ENCODE measurements at regions of chr6 and their contacts with region 1.

Region 1: GRCh38 chr6:31922942-31923341 is 4.6 kb upstream of the C2 start:
- DNase-seq: peak; percentile 50 to 59 (median 58)
- H3K4me3 ChIP-seq: no peak overlapping the region
- H3K27ac ChIP-seq: no peak overlapping the region
- H3K4me1 ChIP-seq: no peaks in the 10 kb centered on the region
- H3K27me3 ChIP-seq: no peaks in the 10 kb centered on the region

Region 2: GRCh38 chr6:31815025-31815838 is 107.7 kb before region 1 on chr6 and contains the starts of genes HSPA1A and HSPA1L:
- CTCF ChIA-PET with region 1: no interaction called
- POLR2A ChIA-PET with region 1: no interaction called
- DNase-seq: peak; percentile 86 to 91 (median 90)
- H3K4me3 ChIP-seq: peak within 1 kb of the TSS; percentile 69 to 98 (median 88)
- H3K27ac ChIP-seq: peak within 1 kb of the TSS; percentile 58 to 83
- H3K4me1 ChIP-seq: peaks cover 16 to 38% (median 27%) of the 10 kb centered on the region in 4 experiments
- H3K27me3 ChIP-seq: no peaks in the 10 kb centered on the region

Region 3: DNA sequence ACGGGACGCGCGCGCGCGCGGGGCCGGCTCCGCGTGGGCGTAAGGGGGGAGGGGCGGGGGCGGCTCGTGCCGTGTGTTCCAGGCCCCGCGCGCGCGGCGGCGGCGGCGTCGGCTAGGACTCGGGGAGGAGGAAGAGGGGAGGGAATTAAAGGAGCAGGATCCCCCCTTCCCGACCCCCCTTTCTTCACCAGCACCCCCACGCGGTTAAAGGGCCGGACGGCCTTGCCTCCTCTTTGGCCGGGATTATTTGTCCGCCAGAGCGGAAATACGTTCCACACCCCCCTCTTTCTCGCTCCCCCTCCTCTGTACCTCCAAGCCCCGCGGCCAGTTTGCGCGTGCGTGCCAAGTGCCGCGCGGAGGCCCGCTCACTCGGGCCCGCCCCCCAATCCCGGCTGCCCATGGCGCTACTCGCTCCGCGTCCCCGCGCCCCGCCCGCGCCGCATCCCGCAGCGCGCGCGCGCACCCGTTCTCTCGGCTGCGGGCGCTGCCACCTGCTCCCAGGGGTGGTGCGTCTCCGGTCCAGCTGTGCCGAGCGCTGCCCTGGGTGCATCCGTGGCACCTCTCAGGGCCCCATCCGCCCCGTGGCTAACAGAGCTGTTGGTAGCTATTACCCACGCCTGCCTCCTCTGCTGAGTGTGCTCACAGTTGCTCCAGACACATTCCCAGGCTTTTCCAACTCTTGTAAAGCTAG is 20.8 kb before region 1 on chr6 and contains the start of gene ZBTB12:
- CTCF ChIA-PET with region 1: interaction called, 12 read pairs
- POLR2A ChIA-PET with region 1: interaction called, 3 read pairs
- DNase-seq: peak; percentile 91 to 97 (median 96)
- H3K4me3 ChIP-seq: peak within 1 kb of the TSS; percentile 50 to 84 (median 75)
- H3K27ac ChIP-seq: peak within 1 kb of the TSS; percentile 40 to 77
- H3K4me1 ChIP-seq: peaks cover 4 to 44% (median 34%) of the 10 kb centered on the region in 4 experiments
- H3K27me3 ChIP-seq: no peaks in the 10 kb centered on the region

Region 4: GRCh38 chr6:31952140-31952805 is 29.3 kb after region 1 on chr6:
- CTCF ChIA-PET with region 1: interaction called, 24 read pairs
- POLR2A ChIA-PET with region 1: no interaction called
- DNase-seq: peak in 2 of 3 donors; percentile 39 to 47
- H3K4me3 ChIP-seq: no peak overlapping the region
- H3K27ac ChIP-seq: no peak overlapping the region
- H3K4me1 ChIP-seq: no peaks in the 10 kb centered on the region
- H3K27me3 ChIP-seq: no peaks in the 10 kb centered on the region

Region 5: DNA sequence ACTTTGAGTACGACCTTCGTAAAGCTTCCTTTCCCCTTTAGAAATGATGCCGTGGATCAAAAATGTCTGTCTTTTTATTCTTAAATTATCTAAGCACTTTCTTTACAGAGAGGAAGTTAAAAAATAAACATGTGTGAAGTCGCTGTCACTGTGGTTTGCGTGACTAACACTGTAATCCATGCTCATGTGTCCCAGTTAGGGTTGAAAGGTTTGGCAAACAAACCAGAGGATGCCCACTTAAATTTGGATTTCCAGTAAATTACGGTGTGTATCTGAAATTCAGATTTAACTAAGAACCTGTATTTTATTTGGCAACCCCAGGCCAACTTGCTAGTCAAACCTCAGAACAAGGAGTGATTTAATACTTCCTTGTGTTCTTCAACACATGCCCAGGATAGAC is 645.6 kb after region 1 on chr6:
- CTCF ChIA-PET with region 1: no interaction called
- POLR2A ChIA-PET with region 1: no interaction called
- DNase-seq: no peak
- H3K4me3 ChIP-seq: no peak overlapping the region
- H3K27ac ChIP-seq: no peak overlapping the region
- H3K4me1 ChIP-seq: no peaks in the 10 kb centered on the region
- H3K27me3 ChIP-seq: no peaks in the 10 kb centered on the region

Measured in common myeloid progenitor, CD34-positive (primary cell).